Posterior vena cava (tissue), 2 donors: ENCODE measurements at regions of chr2 and their contacts with region 1.

Region 1: GRCh38 chr2:98608116-98608999 is at the starts of genes COA5 and UNC50:
- DNase-seq: peak; percentile 98
- total RNA-seq, gene COA5: 19.5 to 25.5 TPM
- total RNA-seq, gene UNC50: 36.3 to 45.6 TPM

Region 2: GRCh38 chr2:98102878-98103277 is 505.5 kb before region 1 on chr2:
- intact Hi-C with region 1: no loop called
- DNase-seq: no peak

Region 3: DNA sequence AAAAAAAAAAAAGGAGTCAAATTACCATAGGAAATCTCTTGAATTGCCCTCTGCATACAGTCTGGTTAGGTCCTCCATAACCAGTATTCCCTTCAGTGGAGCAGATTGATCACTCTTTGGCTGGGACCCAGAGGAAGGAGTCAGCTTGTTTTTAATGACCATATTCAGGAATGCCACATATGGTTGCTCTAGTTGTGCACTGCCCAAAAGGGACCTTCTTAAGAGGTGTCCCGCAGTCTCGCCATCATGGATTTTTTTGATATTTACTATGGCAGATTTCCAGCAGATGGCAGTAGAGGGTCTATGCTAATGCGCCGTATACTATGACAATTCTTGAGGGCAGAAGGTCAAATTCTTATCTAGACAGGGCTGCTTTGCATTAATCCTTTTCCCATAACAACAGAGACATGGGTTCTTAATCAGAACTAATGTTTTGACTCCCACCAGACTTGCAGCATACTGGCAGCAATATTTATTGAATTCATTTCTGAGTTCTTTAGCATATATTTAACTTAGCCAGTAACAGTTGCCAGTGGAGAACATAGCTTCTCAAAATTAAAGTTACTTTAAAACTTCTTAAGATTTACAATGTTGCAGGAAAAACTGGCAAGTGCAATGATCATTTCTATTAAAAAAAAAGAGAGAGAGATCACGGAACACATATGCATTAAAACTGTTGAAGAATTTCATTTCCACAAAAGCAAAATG is 195.5 kb before region 1 on chr2:
- intact Hi-C with region 1: loop called (anchors 10 kb)
- DNase-seq: no peak